Posterior vena cava (tissue), 2 donors: ENCODE measurements at regions of chr10 and their contacts with region 1.

Region 1: DNA sequence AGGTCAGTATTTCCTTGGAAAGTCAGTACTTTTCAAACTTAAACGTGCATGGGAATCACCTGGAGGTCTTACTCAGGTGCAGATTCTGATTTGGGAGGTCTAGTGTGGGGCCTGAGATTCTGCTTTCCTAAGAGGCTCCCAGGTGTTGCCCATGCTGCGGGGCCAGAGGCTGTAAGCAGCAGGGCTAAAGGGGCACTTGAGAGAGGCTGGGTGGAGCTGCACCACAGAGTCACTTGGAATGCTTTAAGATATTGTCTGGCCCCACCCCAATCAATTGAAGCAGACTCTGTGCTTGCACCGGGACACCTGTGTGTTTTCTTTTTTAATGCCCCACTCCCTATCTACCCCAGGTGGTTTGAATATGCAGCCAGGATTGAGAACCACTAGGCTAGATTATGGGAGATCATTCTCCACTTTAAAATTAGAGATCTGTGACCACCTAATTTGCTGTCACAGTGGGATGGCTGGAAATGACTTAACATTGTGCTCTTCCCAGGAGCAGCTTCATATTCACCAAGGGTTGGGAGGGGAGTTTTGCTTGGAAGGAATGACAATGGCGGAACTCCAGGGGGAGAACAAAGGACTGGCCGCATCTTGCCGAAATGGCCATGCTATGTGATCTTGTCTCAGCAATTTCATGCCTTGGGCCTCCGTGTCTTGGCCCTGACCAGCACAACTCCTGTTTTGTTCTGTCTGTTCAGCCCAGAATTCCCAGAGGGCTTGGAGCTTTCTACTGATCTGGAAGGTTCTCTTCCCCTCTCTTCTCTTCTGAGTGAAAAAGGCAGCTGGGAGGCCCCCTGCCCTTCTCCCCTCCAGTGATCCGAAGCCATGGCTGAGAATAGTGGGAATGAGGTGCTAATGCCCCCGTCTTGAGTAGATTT is 80.2 kb downstream of the FAM241B start:
- DNase-seq: peak; percentile 41

Region 2: GRCh38 chr10:69033256-69033655 is 677.0 kb before region 1 on chr10:
- intact Hi-C with region 1: loop called in 1 of 2 experiments (anchors 5 kb)
- DNase-seq: no peak